ENCODE measurements at regions of chr2 and their contacts with region 1.

Region 1: DNA sequence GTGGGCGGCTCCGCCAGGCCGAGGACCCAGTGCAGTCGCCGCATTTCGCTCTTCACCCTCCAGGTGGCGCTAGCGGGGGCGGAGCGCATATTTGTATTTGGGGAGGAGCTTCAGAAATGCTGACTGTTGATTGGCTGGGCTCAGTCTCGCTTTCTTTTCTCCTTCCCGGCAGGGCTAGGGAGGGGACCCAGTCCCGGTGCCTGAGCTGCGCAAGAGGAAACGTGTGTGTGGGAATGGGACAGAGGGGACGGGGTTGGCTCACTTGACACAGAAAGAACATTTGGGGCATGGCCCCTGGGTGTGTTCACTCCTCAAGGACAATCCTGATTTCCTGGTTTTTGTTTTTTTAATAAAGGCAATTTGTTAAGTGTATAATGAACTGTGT is 20.3 kb upstream of the DNMT3A start:
- DNase-seq: peak; percentile 96
- ATAC-seq: peak; percentile 78
- H3K4me3 Mint-ChIP-seq: peak overlapping the region; percentile 89
- H3K27ac Mint-ChIP-seq: peak overlapping the region; percentile 98
- H3K4me1 Mint-ChIP-seq: peaks cover 40% of the 10 kb centered on the region
- H3K27me3 Mint-ChIP-seq: no peaks in the 10 kb centered on the region
- CTCF ChIP-seq: peak; percentile 42

Region 2: DNA sequence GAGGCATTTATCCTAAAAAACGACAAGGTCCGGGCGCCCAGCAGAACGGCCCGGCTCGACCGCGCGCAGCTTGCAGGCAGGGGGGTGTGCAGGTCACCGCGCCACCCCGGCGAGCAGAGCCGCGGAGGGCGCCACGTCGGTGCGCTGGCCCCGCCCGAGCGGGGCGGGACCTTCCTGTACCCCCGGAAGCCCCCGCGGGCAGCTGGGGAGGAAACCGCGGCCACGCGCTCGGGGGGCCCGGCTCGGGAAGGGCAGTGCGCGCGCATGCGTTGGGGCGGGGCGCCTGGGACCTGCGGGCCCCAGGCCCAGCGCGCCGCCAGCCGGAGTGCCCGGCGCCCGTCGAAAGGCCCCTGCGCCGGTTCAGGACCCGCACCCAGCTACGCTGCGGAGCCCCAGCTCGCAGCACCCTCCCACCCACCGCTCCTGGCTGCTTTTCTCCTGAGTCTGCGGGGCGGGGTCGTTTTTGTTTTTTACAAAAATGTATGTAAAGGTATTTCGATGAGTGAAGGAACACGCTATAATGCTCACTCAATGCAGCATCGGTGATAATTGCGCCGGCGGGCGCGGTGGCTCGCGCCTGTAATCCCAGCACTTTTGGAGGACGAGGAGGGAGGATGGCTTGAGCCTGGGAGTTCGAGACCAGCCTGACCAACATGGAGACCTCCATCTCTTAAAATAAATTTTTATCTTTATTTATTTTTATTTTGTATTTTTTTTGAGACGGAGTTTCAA is 145.9 kb before region 1 on chr2:
- CTCF ChIA-PET with region 1: no interaction called
- POLR2A ChIA-PET with region 1: no interaction called
- intact Hi-C with region 1: loop called (anchors 2 kb)
- DNase-seq: peak; percentile 85
- ATAC-seq: peak; percentile 94
- H3K4me3 Mint-ChIP-seq: peak overlapping the region; percentile 72
- H3K27ac Mint-ChIP-seq: peak overlapping the region; percentile 32
- H3K4me1 Mint-ChIP-seq: peaks cover 21% of the 10 kb centered on the region
- H3K27me3 Mint-ChIP-seq: no peaks in the 10 kb centered on the region
- CTCF ChIP-seq: no peak

Region 3: GRCh38 chr2:25301453-25302352 is 60.3 kb before region 1 on chr2:
- CTCF ChIA-PET with region 1: interaction called, 10 read pairs
- POLR2A ChIA-PET with region 1: interaction called, 26 read pairs
- intact Hi-C with region 1: loop called (anchors 1 kb)
- DNase-seq: peak; percentile 61
- ATAC-seq: peak; percentile 95
- H3K4me3 Mint-ChIP-seq: peak overlapping the region; percentile 42
- H3K27ac Mint-ChIP-seq: peak overlapping the region; percentile 46
- H3K4me1 Mint-ChIP-seq: peaks cover 39% of the 10 kb centered on the region
- H3K27me3 Mint-ChIP-seq: no peaks in the 10 kb centered on the region
- CTCF ChIP-seq: no peak

Region 4: GRCh38 chr2:25402477-25402876 is 40.4 kb after region 1 on chr2:
- CTCF ChIA-PET with region 1: no interaction called
- POLR2A ChIA-PET with region 1: interaction called, 43 read pairs
- intact Hi-C with region 1: loop called (anchors 1 kb)
- DNase-seq: no peak
- ATAC-seq: peak; percentile 5
- H3K4me3 Mint-ChIP-seq: no peak overlapping the region
- H3K27ac Mint-ChIP-seq: peak overlapping the region; percentile 95
- H3K4me1 Mint-ChIP-seq: peaks cover 88% of the 10 kb centered on the region
- H3K27me3 Mint-ChIP-seq: no peaks in the 10 kb centered on the region
- CTCF ChIP-seq: no peak

Region 5: GRCh38 chr2:25497918-25498407 is 135.9 kb after region 1 on chr2:
- CTCF ChIA-PET with region 1: interaction called, 4 read pairs
- POLR2A ChIA-PET with region 1: interaction called, 16 read pairs
- intact Hi-C with region 1: no loop called
- DNase-seq: no peak
- ATAC-seq: peak; percentile 78
- H3K4me3 Mint-ChIP-seq: peak overlapping the region; percentile 39
- H3K27ac Mint-ChIP-seq: peak overlapping the region; percentile 83
- H3K4me1 Mint-ChIP-seq: peaks cover 23% of the 10 kb centered on the region
- H3K27me3 Mint-ChIP-seq: no peaks in the 10 kb centered on the region
- CTCF ChIP-seq: no peak

Region 6: DNA sequence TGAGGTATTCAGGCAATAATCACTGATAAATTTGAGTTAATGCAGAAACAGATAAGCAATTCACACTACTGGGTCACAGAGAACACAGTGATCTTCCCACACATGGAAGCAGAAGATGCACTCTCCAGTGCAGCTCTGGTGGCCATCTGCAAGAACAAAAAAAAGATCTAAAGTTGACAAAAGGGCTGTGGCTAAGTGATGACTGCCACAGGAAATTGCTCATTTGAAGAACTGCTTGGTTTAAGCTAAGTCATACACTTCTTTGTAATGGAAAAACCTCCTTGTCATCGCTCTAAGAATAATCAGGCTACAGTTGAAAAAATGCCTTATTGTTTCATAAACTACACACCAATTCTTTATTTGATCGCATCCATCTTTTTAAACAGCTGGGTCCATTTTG is 196.2 kb after region 1 on chr2:
- CTCF ChIA-PET with region 1: no interaction called
- POLR2A ChIA-PET with region 1: interaction called, 8 read pairs
- intact Hi-C with region 1: loop called (anchors 2 kb)
- DNase-seq: no peak
- ATAC-seq: peak; percentile 87
- H3K4me3 Mint-ChIP-seq: peak overlapping the region; percentile 21
- H3K27ac Mint-ChIP-seq: peak overlapping the region; percentile 42
- H3K4me1 Mint-ChIP-seq: peaks cover 43% of the 10 kb centered on the region
- H3K27me3 Mint-ChIP-seq: no peaks in the 10 kb centered on the region
- CTCF ChIP-seq: no peak

Region 7: GRCh38 chr2:25673300-25674076 is 311.4 kb after region 1 on chr2 and contains the start of gene DTNB:
- CTCF ChIA-PET with region 1: no interaction called
- POLR2A ChIA-PET with region 1: no interaction called
- intact Hi-C with region 1: loop called (anchors 1 kb)
- DNase-seq: peak; percentile 83
- ATAC-seq: peak; percentile 79
- H3K4me3 Mint-ChIP-seq: peak within 1 kb of the TSS; percentile 88
- H3K27ac Mint-ChIP-seq: peak within 1 kb of the TSS; percentile 72
- H3K4me1 Mint-ChIP-seq: peaks cover 15% of the 10 kb centered on the region
- H3K27me3 Mint-ChIP-seq: no peaks in the 10 kb centered on the region
- CTCF ChIP-seq: no peak
- total RNA-seq, gene DTNB: 18.3 and 28.9 TPM in 2 replicates

Measured in activated B cell treated with CpG ODN at 0.5 μM for 24 hours (primary cell).